Activated CD4-positive, alpha-beta T cell treated with anti-CD3 and anti-CD28 coated beads for 36 hours (primary cell): ENCODE measurements at regions of chr5 and their contacts with region 1.

Region 1: GRCh38 chr5:169701910-169702451 is 64.9 kb downstream of the DOCK2 start:
- DNase-seq: no peak
- ATAC-seq: no peak
- H3K4me3 Mint-ChIP-seq: no peak overlapping the region
- H3K27ac Mint-ChIP-seq: peak overlapping the region; percentile 76
- H3K4me1 Mint-ChIP-seq: peaks cover 44% of the 10 kb centered on the region
- H3K27me3 Mint-ChIP-seq: no peaks in the 10 kb centered on the region

Region 2: DNA sequence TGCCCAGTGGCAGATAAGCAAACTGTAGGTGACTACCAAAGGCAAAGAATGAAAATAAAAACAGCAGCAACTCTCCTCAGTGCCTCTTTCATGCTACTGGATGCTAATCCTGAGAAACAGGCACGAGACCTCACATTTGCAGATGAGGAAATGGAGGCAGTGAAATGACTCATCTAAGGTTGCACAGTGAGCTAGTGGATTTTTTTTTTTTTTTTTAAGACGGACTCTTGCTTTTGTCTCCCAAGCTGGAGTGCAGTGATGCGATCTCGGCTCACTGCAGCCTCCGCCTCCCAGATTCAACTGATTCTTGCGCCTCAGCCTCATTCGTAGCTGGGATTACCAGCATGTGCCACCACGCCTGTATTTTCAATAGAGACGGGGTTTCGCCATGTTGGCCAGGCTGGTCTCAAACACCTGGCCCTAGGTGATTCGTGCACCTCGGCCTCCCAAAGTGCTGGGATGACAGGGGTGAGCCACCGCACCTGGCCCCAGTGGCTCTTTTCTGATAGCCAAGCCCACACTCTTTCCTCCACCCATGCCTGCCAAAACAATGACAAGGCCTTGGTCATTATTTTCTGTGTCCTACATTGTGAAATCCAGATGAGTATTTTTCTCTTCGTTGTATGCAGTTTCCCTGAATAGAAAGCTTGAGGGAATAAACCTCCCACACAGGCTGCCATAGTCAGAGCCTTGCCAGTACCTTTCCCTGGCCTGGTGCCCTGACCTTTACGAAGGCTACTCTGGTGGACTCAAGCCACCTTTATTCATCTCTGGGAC is 45.7 kb before region 1 on chr5:
- CTCF ChIA-PET with region 1: interaction called, 3 read pairs
- POLR2A ChIA-PET with region 1: interaction called, 4 read pairs
- intact Hi-C with region 1: loop called (anchors 1 to 2 kb)
- DNase-seq: peak; percentile 40
- ATAC-seq: peak; percentile 59
- H3K4me3 Mint-ChIP-seq: no peak overlapping the region
- H3K27ac Mint-ChIP-seq: peak overlapping the region; percentile 79
- H3K4me1 Mint-ChIP-seq: peaks cover 67% of the 10 kb centered on the region
- H3K27me3 Mint-ChIP-seq: no peaks in the 10 kb centered on the region

Region 3: GRCh38 chr5:169980418-169981053 is 278.6 kb after region 1 on chr5 and contains the start of gene INSYN2B:
- CTCF ChIA-PET with region 1: interaction called, 3 read pairs
- POLR2A ChIA-PET with region 1: no interaction called
- intact Hi-C with region 1: loop called in 1 of 2 experiments (anchors 5 kb)
- DNase-seq: peak; percentile 59
- ATAC-seq: peak; percentile 69
- H3K4me3 Mint-ChIP-seq: no peak within 1 kb of the TSS
- H3K27ac Mint-ChIP-seq: no peak within 1 kb of the TSS
- H3K4me1 Mint-ChIP-seq: no peaks in the 10 kb centered on the region
- H3K27me3 Mint-ChIP-seq: no peaks in the 10 kb centered on the region
- total RNA-seq, gene INSYN2B: not detected